ENCODE measurements at regions of chr6 and their contacts with region 1.

Region 1: DNA sequence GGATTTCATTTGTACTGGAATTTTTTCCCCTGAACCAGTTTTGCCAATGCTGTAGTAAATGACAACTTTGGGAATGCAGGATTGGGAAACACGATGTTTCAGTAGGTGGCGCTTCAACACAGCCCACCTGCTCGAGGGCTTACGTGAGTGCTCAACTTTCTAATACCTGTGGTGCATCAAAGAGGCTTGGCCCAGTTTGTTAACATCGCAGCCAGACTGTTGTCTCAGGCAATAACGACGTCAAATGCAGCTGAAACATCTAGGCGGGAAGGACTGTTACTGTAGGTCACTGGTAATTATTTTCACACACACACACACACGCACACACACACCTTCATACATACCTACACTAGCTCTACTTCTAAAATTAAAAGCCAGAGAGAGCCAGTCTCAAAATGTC is 815.5 kb upstream of the SLC35B3 start:
- DNase-seq: peak; percentile 94

Region 2: GRCh38 chr6:8983188-8983688 is 267.6 kb before region 1 on chr6:
- in situ Hi-C with region 1: loop called (anchors 25 kb)
- DNase-seq: peak; percentile 96

Region 3: GRCh38 chr6:9197726-9198125 is 53.1 kb before region 1 on chr6:
- in situ Hi-C with region 1: no loop called
- DNase-seq: no peak

Region 4: GRCh38 chr6:9482030-9482738 is 231.3 kb after region 1 on chr6:
- in situ Hi-C with region 1: loop called (anchors 25 kb)
- DNase-seq: peak; percentile 92